CD8-positive, alpha-beta memory T cell (primary cell): ENCODE measurements at regions of chr7 and their contacts with region 1.

Region 1: DNA sequence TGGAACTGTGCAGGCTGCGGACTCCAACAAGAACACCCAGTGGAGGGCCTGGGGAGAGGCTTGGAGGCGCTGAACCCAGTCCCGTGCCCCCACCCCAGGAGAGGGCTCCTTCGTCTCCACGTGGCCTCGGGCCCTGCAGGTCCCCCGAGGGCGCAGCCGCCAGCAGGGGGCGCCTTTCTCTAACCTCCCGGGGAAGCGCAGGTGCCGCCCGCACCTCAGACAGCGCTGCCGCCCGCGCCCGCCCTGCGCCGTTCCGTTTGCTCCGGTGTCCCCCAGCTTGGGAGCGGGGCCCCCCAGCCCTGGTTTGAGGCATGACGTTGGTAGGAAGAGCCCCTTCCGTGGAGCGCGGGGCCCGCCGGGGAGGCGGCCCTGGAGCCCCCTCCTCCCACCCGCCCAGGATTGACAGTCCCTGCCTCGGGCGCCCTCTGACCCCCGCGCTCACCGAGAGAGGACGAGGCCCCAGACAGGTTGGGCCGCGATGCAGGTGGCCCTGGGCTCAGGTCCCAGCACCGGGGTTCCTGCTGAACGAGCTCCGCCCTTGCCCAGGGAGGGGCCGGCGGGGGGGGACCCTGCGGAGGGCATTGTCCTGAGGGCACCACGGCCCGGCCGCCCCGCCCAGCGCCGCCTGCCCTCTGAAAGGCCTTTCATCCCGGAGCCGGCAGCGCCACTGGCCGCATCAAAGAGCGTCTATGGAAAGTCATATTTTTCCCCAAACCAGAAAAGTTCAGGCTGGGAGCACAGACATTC is 42.8 kb downstream of the FOXL3 start:
- DNase-seq: peak; percentile 78 to 87 (median 81)
- H3K4me3 ChIP-seq: no peak overlapping the region
- H3K4me3 Mint-ChIP-seq: no peak overlapping the region
- H3K27ac ChIP-seq: no peak overlapping the region
- H3K27ac Mint-ChIP-seq: no peak overlapping the region
- H3K4me1 ChIP-seq: peaks cover 3% of the 10 kb centered on the region
- H3K4me1 Mint-ChIP-seq: peaks cover 8 to 10% (median 10%) of the 10 kb centered on the region in 3 donors
- H3K27me3 ChIP-seq: peaks cover 2% of the 10 kb centered on the region
- H3K27me3 Mint-ChIP-seq: peaks cover 7 to 28% of the 10 kb centered on the region in 2 donors

Region 2: GRCh38 chr7:266851-267840 is 65.7 kb before region 1 on chr7:
- CTCF ChIA-PET with region 1: no interaction called
- POLR2A ChIA-PET with region 1: no interaction called
- DNase-seq: peak in 1 of 5 donors; percentile 42
- H3K4me3 ChIP-seq: no peak overlapping the region
- H3K4me3 Mint-ChIP-seq: no peak overlapping the region
- H3K27ac ChIP-seq: no peak overlapping the region
- H3K27ac Mint-ChIP-seq: no peak overlapping the region
- H3K4me1 ChIP-seq: no peaks in the 10 kb centered on the region
- H3K4me1 Mint-ChIP-seq: peaks cover 3 to 4% (median 3%) of the 10 kb centered on the region in 3 donors
- H3K27me3 ChIP-seq: no peaks in the 10 kb centered on the region
- H3K27me3 Mint-ChIP-seq: peaks cover 0 to 2% of the 10 kb centered on the region in 2 donors

Region 3: GRCh38 chr7:464454-465401 is 131.9 kb after region 1 on chr7:
- CTCF ChIA-PET with region 1: no interaction called
- POLR2A ChIA-PET with region 1: no interaction called
- DNase-seq: no peak
- H3K4me3 ChIP-seq: no peak overlapping the region
- H3K4me3 Mint-ChIP-seq: no peak overlapping the region
- H3K27ac ChIP-seq: no peak overlapping the region
- H3K27ac Mint-ChIP-seq: no peak overlapping the region
- H3K4me1 ChIP-seq: no peaks in the 10 kb centered on the region
- H3K4me1 Mint-ChIP-seq: peaks cover 3 to 12% (median 5%) of the 10 kb centered on the region in 3 donors
- H3K27me3 ChIP-seq: no peaks in the 10 kb centered on the region
- H3K27me3 Mint-ChIP-seq: peaks cover 0 to 3% of the 10 kb centered on the region in 2 donors

Region 4: DNA sequence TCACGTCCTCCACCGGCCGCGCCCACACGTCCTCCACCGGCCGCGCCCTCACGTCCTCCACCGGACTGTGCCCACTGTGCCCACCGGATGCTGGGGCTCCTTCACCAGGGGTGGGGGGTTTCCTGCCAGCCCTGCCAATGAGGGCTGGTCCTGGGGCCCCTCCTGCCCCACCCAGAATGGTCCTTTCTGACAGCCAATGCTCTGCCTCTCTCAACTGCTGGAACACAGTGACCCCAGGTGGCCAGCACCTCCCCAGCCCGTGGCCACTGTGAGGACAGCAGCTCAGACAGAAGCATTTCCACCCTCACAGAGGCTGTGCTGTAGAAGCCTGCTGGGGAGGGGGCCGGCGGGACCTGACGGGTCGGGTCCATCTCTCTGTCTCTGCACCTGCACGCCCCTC is 303.6 kb after region 1 on chr7:
- CTCF ChIA-PET with region 1: interaction called, 21 read pairs
- POLR2A ChIA-PET with region 1: no interaction called
- DNase-seq: peak; percentile 38 to 72 (median 47)
- H3K4me3 ChIP-seq: no peak overlapping the region
- H3K4me3 Mint-ChIP-seq: peak overlapping the region in 1 of 7 donors; percentile 61
- H3K27ac ChIP-seq: peak overlapping the region; percentile 47
- H3K27ac Mint-ChIP-seq: peak overlapping the region in 3 of 8 donors; percentile 47 to 68 (median 63)
- H3K4me1 ChIP-seq: no peaks in the 10 kb centered on the region
- H3K4me1 Mint-ChIP-seq: peaks cover 8 to 14% (median 10%) of the 10 kb centered on the region in 3 donors
- H3K27me3 ChIP-seq: no peaks in the 10 kb centered on the region
- H3K27me3 Mint-ChIP-seq: no peaks in the 10 kb centered on the region